CD4-positive, alpha-beta T cell (primary cell): ENCODE measurements at regions of chr16 and their contacts with region 1.

Region 1: DNA sequence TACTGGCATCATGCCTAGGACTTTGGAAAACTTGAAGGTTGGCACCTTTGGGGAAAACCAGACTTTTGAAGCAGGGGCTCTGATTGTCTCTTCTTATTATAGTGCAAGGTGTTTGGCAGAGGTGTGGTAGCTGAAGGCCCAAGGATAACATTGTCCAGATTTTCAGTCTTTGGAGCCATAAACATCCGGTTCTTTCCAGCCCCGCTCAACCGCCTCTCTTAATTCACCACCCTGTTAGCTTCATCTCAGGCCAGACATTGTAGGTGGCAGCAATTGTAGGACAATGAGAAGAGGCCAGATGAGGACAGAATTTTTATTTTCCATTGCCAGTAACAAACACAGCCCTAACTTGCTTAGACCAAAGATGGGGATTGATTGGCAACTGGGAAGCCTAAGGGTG is 649.8 kb downstream of the MAF start:
- DNase-seq: no peak
- ATAC-seq: no peak
- H3K4me3 ChIP-seq: no peak overlapping the region
- H3K4me3 Mint-ChIP-seq: no peak overlapping the region
- H3K27ac ChIP-seq: no peak overlapping the region
- H3K27ac Mint-ChIP-seq: no peak overlapping the region
- H3K4me1 ChIP-seq: no peaks in the 10 kb centered on the region
- H3K4me1 Mint-ChIP-seq: no peaks in the 10 kb centered on the region
- H3K27me3 ChIP-seq: no peaks in the 10 kb centered on the region
- H3K27me3 Mint-ChIP-seq: no peaks in the 10 kb centered on the region
- CTCF ChIP-seq: no peak

Region 2: GRCh38 chr16:77171745-77172635 is 1778.8 kb before region 1 on chr16:
- CTCF ChIA-PET with region 1: no interaction called
- POLR2A ChIA-PET with region 1: no interaction called
- intact Hi-C with region 1: no loop called
- DNase-seq: peak in 4 of 14 experiments; percentile 33 to 71 (median 62)
- ATAC-seq: peak; percentile 57
- H3K4me3 ChIP-seq: no peak overlapping the region
- H3K4me3 Mint-ChIP-seq: no peak overlapping the region
- H3K27ac ChIP-seq: no peak overlapping the region
- H3K27ac Mint-ChIP-seq: no peak overlapping the region
- H3K4me1 ChIP-seq: no peaks in the 10 kb centered on the region
- H3K4me1 Mint-ChIP-seq: no peaks in the 10 kb centered on the region
- H3K27me3 ChIP-seq: peaks cover 5 to 39% of the 10 kb centered on the region in 2 experiments
- H3K27me3 Mint-ChIP-seq: peaks cover 77% of the 10 kb centered on the region
- CTCF ChIP-seq: peak; percentile 93

Region 3: GRCh38 chr16:78939597-78939996 is 11.2 kb before region 1 on chr16:
- CTCF ChIA-PET with region 1: no interaction called
- POLR2A ChIA-PET with region 1: interaction called, 3 read pairs
- intact Hi-C with region 1: loop called in 1 of 2 experiments (anchors 1 kb)
- DNase-seq: peak in 1 of 14 experiments; percentile 11
- ATAC-seq: no peak
- H3K4me3 ChIP-seq: no peak overlapping the region
- H3K4me3 Mint-ChIP-seq: no peak overlapping the region
- H3K27ac ChIP-seq: no peak overlapping the region
- H3K27ac Mint-ChIP-seq: no peak overlapping the region
- H3K4me1 ChIP-seq: no peaks in the 10 kb centered on the region
- H3K4me1 Mint-ChIP-seq: no peaks in the 10 kb centered on the region
- H3K27me3 ChIP-seq: no peaks in the 10 kb centered on the region
- H3K27me3 Mint-ChIP-seq: no peaks in the 10 kb centered on the region
- CTCF ChIP-seq: no peak